CD8-positive, alpha-beta T cell (primary cell): ENCODE measurements at regions of chr6 and their contacts with region 1.

Region 1: GRCh38 chr6:3258720-3259490 is at the start of gene PSMG4:
- DNase-seq: peak; percentile 85 to 96 (median 93)
- ATAC-seq: peak; percentile 82
- H3K4me3 ChIP-seq: peak within 1 kb of the TSS; percentile 81 to 82
- H3K4me3 Mint-ChIP-seq: peak within 1 kb of the TSS; percentile 95
- H3K27ac ChIP-seq: peak within 1 kb of the TSS; percentile 54 to 76
- H3K27ac Mint-ChIP-seq: peak within 1 kb of the TSS; percentile 94
- H3K4me1 ChIP-seq: peaks cover 37% of the 10 kb centered on the region
- H3K4me1 Mint-ChIP-seq: peaks cover 42% of the 10 kb centered on the region
- H3K27me3 ChIP-seq: no peaks in the 10 kb centered on the region
- H3K27me3 Mint-ChIP-seq: no peaks in the 10 kb centered on the region
- CTCF ChIP-seq: no peak
- total RNA-seq, gene PSMG4: 11.8 to 12.0 TPM

Region 2: GRCh38 chr6:3068329-3069214 is 190.3 kb before region 1 on chr6 and contains the start of gene RIPK1:
- CTCF ChIA-PET with region 1: no interaction called
- POLR2A ChIA-PET with region 1: no interaction called
- intact Hi-C with region 1: loop called (anchors 2 kb)
- DNase-seq: peak; percentile 85 to 98 (median 93)
- ATAC-seq: peak; percentile 74
- H3K4me3 ChIP-seq: peak within 1 kb of the TSS; percentile 67 to 95
- H3K4me3 Mint-ChIP-seq: peak within 1 kb of the TSS; percentile 98
- H3K27ac ChIP-seq: peak within 1 kb of the TSS; percentile 93 to 96
- H3K27ac Mint-ChIP-seq: peak within 1 kb of the TSS; percentile 99
- H3K4me1 ChIP-seq: peaks cover 39% of the 10 kb centered on the region
- H3K4me1 Mint-ChIP-seq: peaks cover 62% of the 10 kb centered on the region
- H3K27me3 ChIP-seq: no peaks in the 10 kb centered on the region
- H3K27me3 Mint-ChIP-seq: no peaks in the 10 kb centered on the region
- CTCF ChIP-seq: peak; percentile 33
- total RNA-seq, gene RIPK1: 18.6 to 19.7 TPM

Region 3: DNA sequence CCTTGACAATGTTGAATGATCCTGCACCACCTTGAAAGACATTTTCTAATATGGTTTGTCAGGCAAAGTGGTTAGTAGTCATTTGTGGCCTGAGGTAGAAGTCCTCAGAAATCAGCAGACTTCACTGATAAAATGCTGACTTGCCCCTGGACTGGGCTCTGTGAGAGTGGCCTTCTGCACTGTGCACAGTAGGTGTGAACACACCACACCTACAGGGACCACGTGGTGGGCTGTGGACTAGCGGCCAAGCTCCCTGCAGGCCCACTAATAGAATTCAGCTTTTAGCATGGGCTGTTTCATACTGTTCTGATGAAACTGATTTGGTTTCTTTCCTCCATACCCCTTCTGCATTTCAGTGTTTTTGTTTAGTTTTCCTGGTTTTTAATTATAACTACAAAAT is 133.1 kb before region 1 on chr6:
- CTCF ChIA-PET with region 1: interaction called, 5 read pairs
- POLR2A ChIA-PET with region 1: interaction called, 3 read pairs
- intact Hi-C with region 1: loop called in 1 of 2 experiments (anchors 2 kb)
- DNase-seq: no peak
- ATAC-seq: no peak
- H3K4me3 ChIP-seq: no peak overlapping the region
- H3K4me3 Mint-ChIP-seq: no peak overlapping the region
- H3K27ac ChIP-seq: no peak overlapping the region
- H3K27ac Mint-ChIP-seq: no peak overlapping the region
- H3K4me1 ChIP-seq: no peaks in the 10 kb centered on the region
- H3K4me1 Mint-ChIP-seq: peaks cover 4% of the 10 kb centered on the region
- H3K27me3 ChIP-seq: no peaks in the 10 kb centered on the region
- H3K27me3 Mint-ChIP-seq: no peaks in the 10 kb centered on the region
- CTCF ChIP-seq: no peak

Region 4: DNA sequence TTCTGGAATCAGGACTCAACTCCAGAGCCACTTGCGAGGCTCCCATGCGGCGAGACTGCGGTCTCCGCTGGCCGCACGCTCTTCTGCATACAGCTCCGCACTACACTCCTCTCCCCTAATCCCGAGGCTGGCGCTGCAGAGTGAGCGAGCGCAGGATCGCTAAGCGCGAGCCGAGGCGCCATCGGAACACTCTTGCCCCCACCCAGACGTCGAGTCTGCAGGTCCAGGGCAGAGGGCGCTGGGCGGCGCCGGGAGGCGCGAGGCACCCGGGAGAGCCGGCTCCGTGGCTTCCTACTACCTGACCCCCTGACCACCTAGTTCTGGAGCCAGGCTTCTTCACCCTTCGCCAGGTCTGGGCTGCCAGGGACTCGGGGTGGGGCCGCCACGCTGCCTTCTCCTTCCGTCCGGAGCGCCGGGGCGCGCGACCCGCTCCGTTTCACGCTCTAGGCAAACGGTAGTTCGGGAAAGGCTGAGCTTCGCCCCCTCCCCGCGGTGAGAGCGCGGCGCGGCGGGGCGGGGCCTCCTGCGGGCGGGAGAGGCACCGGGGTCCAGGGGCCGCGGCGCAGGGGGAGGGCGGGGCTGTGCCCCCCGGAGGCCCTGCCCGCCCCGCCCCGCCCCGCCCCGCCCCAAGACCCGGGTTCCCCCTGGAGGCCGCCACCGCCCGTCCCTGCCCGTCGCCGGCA is 96.2 kb before region 1 on chr6:
- CTCF ChIA-PET with region 1: no interaction called
- POLR2A ChIA-PET with region 1: no interaction called
- intact Hi-C with region 1: loop called (anchors 1 to 2 kb)
- DNase-seq: peak; percentile 12 to 84 (median 63)
- ATAC-seq: peak; percentile 47
- H3K4me3 ChIP-seq: peak overlapping the region; percentile 71 to 79
- H3K4me3 Mint-ChIP-seq: peak overlapping the region; percentile 84
- H3K27ac ChIP-seq: peak overlapping the region in 1 of 2 experiments; percentile 72
- H3K27ac Mint-ChIP-seq: peak overlapping the region; percentile 86
- H3K4me1 ChIP-seq: peaks cover 33% of the 10 kb centered on the region
- H3K4me1 Mint-ChIP-seq: peaks cover 37% of the 10 kb centered on the region
- H3K27me3 ChIP-seq: no peaks in the 10 kb centered on the region
- H3K27me3 Mint-ChIP-seq: no peaks in the 10 kb centered on the region
- CTCF ChIP-seq: no peak

Region 5: DNA sequence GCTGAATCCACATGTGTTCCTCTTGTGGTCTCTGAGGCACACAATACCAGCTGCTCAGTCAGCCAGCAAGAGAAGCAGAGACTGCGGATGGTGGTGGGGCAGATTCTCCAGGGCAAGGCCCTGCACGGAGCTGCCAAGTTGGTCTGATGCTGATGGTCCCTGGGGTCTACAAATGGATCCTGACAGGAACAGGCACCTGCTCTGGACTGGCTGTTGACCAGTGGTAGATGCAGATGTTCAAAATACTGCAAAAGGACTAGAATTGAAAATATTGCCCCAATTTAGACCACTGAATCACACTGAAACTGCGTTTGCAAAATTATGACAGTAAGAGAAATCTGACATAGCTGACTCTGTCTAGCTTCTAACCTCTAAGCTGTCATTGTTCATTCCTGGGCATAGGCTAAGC is 71.9 kb before region 1 on chr6:
- CTCF ChIA-PET with region 1: no interaction called
- POLR2A ChIA-PET with region 1: no interaction called
- intact Hi-C with region 1: no loop called
- DNase-seq: no peak
- ATAC-seq: no peak
- H3K4me3 ChIP-seq: no peak overlapping the region
- H3K4me3 Mint-ChIP-seq: no peak overlapping the region
- H3K27ac ChIP-seq: no peak overlapping the region
- H3K27ac Mint-ChIP-seq: no peak overlapping the region
- H3K4me1 ChIP-seq: no peaks in the 10 kb centered on the region
- H3K4me1 Mint-ChIP-seq: no peaks in the 10 kb centered on the region
- H3K27me3 ChIP-seq: peaks cover 0 to 5% of the 10 kb centered on the region in 2 experiments
- H3K27me3 Mint-ChIP-seq: peaks cover 15% of the 10 kb centered on the region
- CTCF ChIP-seq: no peak

Region 6: GRCh38 chr6:3341467-3341866 is 82.6 kb after region 1 on chr6:
- CTCF ChIA-PET with region 1: no interaction called
- POLR2A ChIA-PET with region 1: no interaction called
- intact Hi-C with region 1: no loop called
- DNase-seq: no peak
- ATAC-seq: no peak
- H3K4me3 ChIP-seq: no peak overlapping the region
- H3K4me3 Mint-ChIP-seq: no peak overlapping the region
- H3K27ac ChIP-seq: no peak overlapping the region
- H3K27ac Mint-ChIP-seq: no peak overlapping the region
- H3K4me1 ChIP-seq: no peaks in the 10 kb centered on the region
- H3K4me1 Mint-ChIP-seq: peaks cover 9% of the 10 kb centered on the region
- H3K27me3 ChIP-seq: no peaks in the 10 kb centered on the region
- H3K27me3 Mint-ChIP-seq: no peaks in the 10 kb centered on the region
- CTCF ChIP-seq: no peak

Region 7: GRCh38 chr6:4775584-4776494 is 1516.9 kb after region 1 on chr6 and contains the start of gene CDYL:
- CTCF ChIA-PET with region 1: no interaction called
- POLR2A ChIA-PET with region 1: no interaction called
- intact Hi-C with region 1: loop called in 1 of 2 experiments (anchors 5 kb)
- DNase-seq: peak; percentile 76 to 94 (median 89)
- ATAC-seq: peak; percentile 75
- H3K4me3 ChIP-seq: peak within 1 kb of the TSS; percentile 63 to 64
- H3K4me3 Mint-ChIP-seq: peak within 1 kb of the TSS; percentile 91
- H3K27ac ChIP-seq: peak within 1 kb of the TSS; percentile 29 to 38
- H3K27ac Mint-ChIP-seq: peak within 1 kb of the TSS; percentile 91
- H3K4me1 ChIP-seq: peaks cover 25% of the 10 kb centered on the region
- H3K4me1 Mint-ChIP-seq: peaks cover 44% of the 10 kb centered on the region
- H3K27me3 ChIP-seq: no peaks in the 10 kb centered on the region
- H3K27me3 Mint-ChIP-seq: no peaks in the 10 kb centered on the region
- CTCF ChIP-seq: no peak
- total RNA-seq, gene CDYL: 35.9 to 36.3 TPM